Activated CD4-positive, alpha-beta T cell treated with anti-CD3 and anti-CD28 coated beads, Interleukin-2, amount 10 ng/mL, durations not matched to agents 24 days and 14 days (primary cell): ENCODE measurements at regions of chr15 and their contacts with region 1.

Region 1: DNA sequence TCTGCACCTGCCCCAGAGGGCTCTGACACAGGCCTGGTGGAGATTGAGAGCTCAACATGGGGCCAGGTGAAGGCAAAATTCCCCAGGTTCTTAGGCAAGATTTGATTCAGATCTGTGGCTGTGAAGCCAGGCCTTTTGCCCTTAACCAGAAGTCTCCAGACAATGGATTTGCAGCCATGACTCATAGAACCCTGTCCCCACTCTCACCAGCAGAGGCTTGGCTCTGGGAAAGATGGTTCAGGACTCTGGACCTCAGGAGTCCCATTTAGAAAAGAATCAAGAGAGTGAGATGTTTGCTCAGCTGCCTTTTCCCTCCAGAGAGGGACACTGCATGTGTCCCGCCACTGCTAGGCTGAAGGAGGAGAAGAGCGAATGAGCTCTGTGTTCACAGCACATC is 361.4 kb upstream of the ICE2 start:
- DNase-seq: no peak
- H3K4me3 Mint-ChIP-seq: peak overlapping the region; percentile 63
- H3K27ac Mint-ChIP-seq: peak overlapping the region; percentile 35
- H3K4me1 Mint-ChIP-seq: peaks cover 67% of the 10 kb centered on the region
- H3K27me3 Mint-ChIP-seq: peaks cover 16% of the 10 kb centered on the region

Region 2: DNA sequence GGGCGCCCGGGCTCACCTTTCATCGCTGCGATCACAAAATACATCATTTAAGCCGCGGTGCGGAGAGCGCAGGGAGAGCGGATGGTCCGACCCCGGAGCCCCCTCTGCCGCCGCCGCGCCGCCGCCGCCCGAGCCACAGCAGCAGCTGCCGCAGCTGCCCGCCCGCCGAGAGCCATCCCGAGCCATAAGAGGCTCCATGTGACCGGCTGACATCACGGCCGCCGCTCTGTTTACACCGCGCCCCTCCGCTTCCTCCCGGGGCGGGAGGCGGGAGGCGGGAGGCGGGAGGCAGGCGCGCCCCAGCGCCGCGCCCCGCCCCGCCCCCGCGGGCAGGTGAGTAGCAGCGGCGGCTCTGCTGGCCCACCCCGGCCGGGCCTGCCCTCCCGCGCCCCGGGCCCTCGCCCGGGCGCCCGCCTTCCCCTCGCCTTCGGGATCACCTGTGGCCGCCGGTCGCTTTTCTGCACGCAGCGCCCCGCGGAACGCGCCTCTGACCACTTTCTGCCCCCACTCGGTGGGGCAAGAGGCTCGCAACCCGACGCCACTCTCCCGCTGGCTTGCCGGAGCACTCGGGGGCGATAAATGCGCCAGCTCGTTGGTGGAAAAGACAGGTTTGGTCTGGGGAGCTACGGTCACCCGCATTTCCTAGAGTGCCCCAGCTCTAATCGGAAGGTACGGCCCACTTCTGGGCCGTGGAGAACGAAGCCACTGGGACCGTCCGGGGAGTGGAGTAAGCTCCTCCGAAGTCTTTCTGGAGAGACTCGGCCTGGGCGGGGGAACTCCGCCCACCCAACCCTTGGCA is 247.7 kb before region 1 on chr15:
- intact Hi-C with region 1: loop called (anchors 5 kb)
- DNase-seq: peak; percentile 96
- H3K4me3 Mint-ChIP-seq: peak overlapping the region; percentile 87
- H3K27ac Mint-ChIP-seq: peak overlapping the region; percentile 80
- H3K4me1 Mint-ChIP-seq: peaks cover 51% of the 10 kb centered on the region
- H3K27me3 Mint-ChIP-seq: peaks cover 2% of the 10 kb centered on the region

Region 3: DNA sequence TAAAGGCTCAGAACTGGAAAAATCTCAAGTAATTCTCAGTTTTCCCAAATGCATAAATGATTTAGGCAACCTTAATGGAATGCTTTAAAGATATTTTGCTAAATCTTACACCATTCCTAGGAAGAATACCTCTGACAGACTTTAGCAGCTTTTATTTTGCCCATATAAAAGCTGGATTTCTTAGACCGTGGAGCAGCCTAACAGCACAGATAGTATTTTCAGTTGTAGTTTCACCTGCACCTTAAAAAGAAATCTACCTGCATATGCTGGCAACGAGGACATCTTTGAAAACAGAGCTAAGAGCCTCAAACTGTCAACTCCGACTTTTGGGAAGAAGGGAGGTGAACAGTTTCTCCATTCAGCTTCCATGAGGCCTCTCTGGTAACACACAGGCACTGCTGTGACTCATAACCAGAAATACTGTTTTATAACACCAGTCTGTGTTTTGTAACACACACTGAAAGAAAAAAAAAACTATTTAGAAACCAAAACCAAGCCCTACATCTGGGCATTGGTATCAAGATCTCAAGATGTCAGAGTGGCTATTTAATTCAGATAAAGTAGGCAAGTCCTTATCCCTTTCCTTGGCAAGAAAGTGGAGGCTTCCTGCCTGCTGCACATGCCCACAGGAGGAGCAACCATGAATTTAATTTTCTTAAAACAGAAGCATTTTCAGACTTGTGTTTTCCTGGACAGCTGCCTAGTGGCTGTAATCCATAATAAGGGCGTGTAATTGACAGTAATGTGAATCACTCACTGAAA is 179.8 kb before region 1 on chr15:
- intact Hi-C with region 1: no loop called
- DNase-seq: peak; percentile 64
- H3K4me3 Mint-ChIP-seq: no peak overlapping the region
- H3K27ac Mint-ChIP-seq: no peak overlapping the region
- H3K4me1 Mint-ChIP-seq: peaks cover 16% of the 10 kb centered on the region
- H3K27me3 Mint-ChIP-seq: peaks cover 3% of the 10 kb centered on the region

Region 4: DNA sequence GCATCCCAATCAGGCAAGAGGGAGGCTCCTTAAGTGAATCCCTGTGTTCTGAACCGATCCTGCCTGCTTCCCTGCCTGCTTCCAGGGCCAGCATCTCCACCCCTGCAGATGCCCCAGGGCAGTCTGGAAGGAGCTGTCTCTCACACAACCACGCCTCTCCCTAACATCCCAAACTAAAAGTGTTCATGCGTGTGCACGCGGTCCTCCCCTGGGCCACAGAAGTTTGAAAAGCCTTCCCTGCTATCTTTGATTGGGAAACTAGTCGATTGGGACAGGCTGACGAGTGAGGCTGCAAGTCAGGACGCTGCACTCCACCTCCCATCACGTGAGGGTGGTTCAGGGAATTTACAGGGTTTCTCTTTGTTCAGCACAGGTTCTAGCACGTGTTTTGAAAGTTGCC is 20.4 kb before region 1 on chr15:
- intact Hi-C with region 1: no loop called
- DNase-seq: no peak
- H3K4me3 Mint-ChIP-seq: no peak overlapping the region
- H3K27ac Mint-ChIP-seq: no peak overlapping the region
- H3K4me1 Mint-ChIP-seq: peaks cover 2% of the 10 kb centered on the region
- H3K27me3 Mint-ChIP-seq: peaks cover 10% of the 10 kb centered on the region

Region 5: GRCh38 chr15:60889006-60889405 is 48.7 kb after region 1 on chr15:
- intact Hi-C with region 1: no loop called
- DNase-seq: no peak
- H3K4me3 Mint-ChIP-seq: no peak overlapping the region
- H3K27ac Mint-ChIP-seq: no peak overlapping the region
- H3K4me1 Mint-ChIP-seq: peaks cover 13% of the 10 kb centered on the region
- H3K27me3 Mint-ChIP-seq: peaks cover 15% of the 10 kb centered on the region

Region 6: GRCh38 chr15:60916679-60917460 is 76.6 kb after region 1 on chr15:
- intact Hi-C with region 1: loop called (anchors 2 kb)
- DNase-seq: peak; percentile 95
- H3K4me3 Mint-ChIP-seq: no peak overlapping the region
- H3K27ac Mint-ChIP-seq: peak overlapping the region; percentile 75
- H3K4me1 Mint-ChIP-seq: peaks cover 27% of the 10 kb centered on the region
- H3K27me3 Mint-ChIP-seq: no peaks in the 10 kb centered on the region